ENCODE measurements at regions of chr1 and their contacts with region 1.

Region 1: GRCh38 chr1:168342572-168343280 is 62.0 kb downstream of the TBX19 start:
- DNase-seq: peak; percentile 61
- ATAC-seq: peak; percentile 98
- H3K4me3 ChIP-seq: no peak overlapping the region
- H3K27ac ChIP-seq: no peak overlapping the region
- H3K4me1 ChIP-seq: peaks cover 10% of the 10 kb centered on the region
- H3K27me3 ChIP-seq: no peaks in the 10 kb centered on the region
- CTCF ChIP-seq: peak; percentile 73 to 91 (median 82)
- EP300 ChIP-seq: no peak
- POLR2A ChIP-seq: no peak
- RAD21 ChIP-seq: peak; percentile 86

Region 2: GRCh38 chr1:168225476-168226190 is 117.1 kb before region 1 on chr1 and contains the start of gene SFT2D2:
- CTCF ChIA-PET with region 1: interaction called, 15 read pairs
- POLR2A ChIA-PET with region 1: no interaction called
- RAD21 ChIA-PET with region 1: interaction called, 3 read pairs
- SMC1A ChIA-PET with region 1: interaction called, 5 read pairs
- in situ Hi-C with region 1: no loop called
- intact Hi-C with region 1: no loop called
- DNase-seq: no peak
- ATAC-seq: peak; percentile 92
- H3K4me3 ChIP-seq: peak within 1 kb of the TSS; percentile 79
- H3K27ac ChIP-seq: peak within 1 kb of the TSS; percentile 85
- H3K4me1 ChIP-seq: peaks cover 28% of the 10 kb centered on the region
- H3K27me3 ChIP-seq: no peaks in the 10 kb centered on the region
- CTCF ChIP-seq: no peak
- EP300 ChIP-seq: no peak
- POLR2A ChIP-seq: peak; percentile 94
- RAD21 ChIP-seq: no peak
- polyA plus RNA-seq, gene SFT2D2: 5.6 to 6.3 TPM

Region 3: DNA sequence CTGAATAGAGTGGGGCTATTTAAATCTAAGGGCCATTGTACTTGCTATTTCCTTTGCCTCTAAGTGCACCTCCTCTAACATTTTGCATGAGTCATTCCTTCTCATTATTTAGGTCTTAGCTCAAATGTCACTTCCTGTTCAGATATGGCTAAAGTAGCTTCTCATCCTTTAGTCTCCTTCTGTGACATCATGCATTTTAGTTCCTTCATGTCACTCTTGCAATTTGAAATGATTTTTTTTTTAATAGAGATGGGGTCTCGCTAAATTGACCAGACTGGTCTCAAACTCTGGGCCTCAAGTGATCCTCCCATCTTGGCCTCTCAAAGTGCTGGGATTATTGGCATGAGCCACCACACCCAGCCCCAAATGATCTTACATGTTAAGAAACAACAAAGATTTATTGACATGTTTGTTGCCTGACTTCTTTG is 55.5 kb before region 1 on chr1:
- CTCF ChIA-PET with region 1: no interaction called
- POLR2A ChIA-PET with region 1: no interaction called
- RAD21 ChIA-PET with region 1: no interaction called
- SMC1A ChIA-PET with region 1: no interaction called
- in situ Hi-C with region 1: no loop called
- intact Hi-C with region 1: no loop called
- DNase-seq: no peak
- ATAC-seq: peak; percentile 56
- H3K4me3 ChIP-seq: no peak overlapping the region
- H3K27ac ChIP-seq: no peak overlapping the region
- H3K4me1 ChIP-seq: no peaks in the 10 kb centered on the region
- H3K27me3 ChIP-seq: no peaks in the 10 kb centered on the region
- CTCF ChIP-seq: no peak
- EP300 ChIP-seq: no peak
- POLR2A ChIP-seq: no peak
- RAD21 ChIP-seq: no peak

Region 4: DNA sequence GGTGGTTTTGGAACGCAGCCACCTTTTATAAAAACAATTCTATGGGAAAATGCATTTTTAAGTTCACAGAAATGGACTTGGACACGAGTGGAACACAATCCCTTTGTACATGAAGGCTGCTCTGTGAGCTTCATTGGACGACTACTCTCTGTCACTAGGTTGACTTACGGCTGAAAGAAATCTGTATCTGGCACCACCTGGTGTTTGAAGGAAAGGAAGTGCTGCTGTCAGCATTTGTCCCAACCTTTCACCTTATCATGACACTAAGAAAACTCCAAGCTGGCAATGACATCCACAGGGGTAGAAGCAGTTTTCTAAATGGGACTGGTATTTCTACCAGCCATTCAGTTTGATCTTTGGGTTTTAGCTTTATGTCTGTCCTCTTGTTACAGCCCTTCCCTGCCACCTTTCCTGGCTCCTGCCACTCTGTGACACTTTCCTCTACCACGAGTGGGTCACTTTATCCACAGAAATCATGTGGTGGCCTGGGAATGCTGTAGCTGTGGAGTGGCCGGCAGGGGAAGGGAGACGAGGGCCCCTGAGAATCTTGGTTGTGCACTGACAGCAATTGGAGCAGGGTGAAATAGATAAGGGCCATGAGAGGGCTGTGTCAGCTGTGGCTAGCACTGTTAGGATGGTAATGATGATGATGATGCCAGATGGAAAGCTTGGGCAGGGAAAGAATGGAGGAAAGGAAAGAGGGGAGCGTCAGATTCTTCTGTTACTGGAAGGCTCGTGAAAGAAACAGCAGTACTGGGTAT is 23.2 kb after region 1 on chr1:
- CTCF ChIA-PET with region 1: interaction called, 44 read pairs
- POLR2A ChIA-PET with region 1: no interaction called
- RAD21 ChIA-PET with region 1: interaction called, 18 read pairs
- SMC1A ChIA-PET with region 1: interaction called, 21 read pairs
- in situ Hi-C with region 1: no loop called
- intact Hi-C with region 1: no loop called
- DNase-seq: no peak
- ATAC-seq: 0 out of 3 replicates have a peak, but pooled peaks have one; percentile 22
- H3K4me3 ChIP-seq: no peak overlapping the region
- H3K27ac ChIP-seq: no peak overlapping the region
- H3K4me1 ChIP-seq: no peaks in the 10 kb centered on the region
- H3K27me3 ChIP-seq: peaks cover 0 to 2% of the 10 kb centered on the region in 2 experiments; a peak in 1 of 4 replicates
- CTCF ChIP-seq: peak; percentile 6 to 23 (median 12); a peak in 2 of 6 replicates
- EP300 ChIP-seq: no peak
- POLR2A ChIP-seq: no peak
- RAD21 ChIP-seq: peak; percentile 43

Region 5: GRCh38 chr1:168428063-168428731 is 85.5 kb after region 1 on chr1:
- CTCF ChIA-PET with region 1: interaction called, 283 read pairs
- POLR2A ChIA-PET with region 1: no interaction called
- RAD21 ChIA-PET with region 1: interaction called, 193 read pairs
- SMC1A ChIA-PET with region 1: interaction called, 239 read pairs
- in situ Hi-C with region 1: no loop called
- intact Hi-C with region 1: no loop called
- DNase-seq: no peak
- ATAC-seq: no peak
- H3K4me3 ChIP-seq: no peak overlapping the region
- H3K27ac ChIP-seq: no peak overlapping the region
- H3K4me1 ChIP-seq: no peaks in the 10 kb centered on the region
- H3K27me3 ChIP-seq: no peaks in the 10 kb centered on the region; a peak in 1 of 4 replicates
- CTCF ChIP-seq: no peak
- EP300 ChIP-seq: no peak
- POLR2A ChIP-seq: no peak
- RAD21 ChIP-seq: no peak

Region 6: GRCh38 chr1:168509875-168510791 is 167.4 kb after region 1 on chr1:
- CTCF ChIA-PET with region 1: interaction called, 9 read pairs
- POLR2A ChIA-PET with region 1: no interaction called
- RAD21 ChIA-PET with region 1: interaction called, 23 read pairs
- SMC1A ChIA-PET with region 1: interaction called, 10 read pairs
- in situ Hi-C with region 1: no loop called
- intact Hi-C with region 1: no loop called
- DNase-seq: peak; percentile 88
- ATAC-seq: peak; percentile 90
- H3K4me3 ChIP-seq: no peak overlapping the region
- H3K27ac ChIP-seq: peak overlapping the region; percentile 61
- H3K4me1 ChIP-seq: peaks cover 16% of the 10 kb centered on the region
- H3K27me3 ChIP-seq: no peaks in the 10 kb centered on the region
- CTCF ChIP-seq: no peak
- EP300 ChIP-seq: peak; percentile 12 to 64; a peak in 3 of 4 replicates
- POLR2A ChIP-seq: no peak
- RAD21 ChIP-seq: no peak; the same call in 1 of the 2 replicates

Region 7: DNA sequence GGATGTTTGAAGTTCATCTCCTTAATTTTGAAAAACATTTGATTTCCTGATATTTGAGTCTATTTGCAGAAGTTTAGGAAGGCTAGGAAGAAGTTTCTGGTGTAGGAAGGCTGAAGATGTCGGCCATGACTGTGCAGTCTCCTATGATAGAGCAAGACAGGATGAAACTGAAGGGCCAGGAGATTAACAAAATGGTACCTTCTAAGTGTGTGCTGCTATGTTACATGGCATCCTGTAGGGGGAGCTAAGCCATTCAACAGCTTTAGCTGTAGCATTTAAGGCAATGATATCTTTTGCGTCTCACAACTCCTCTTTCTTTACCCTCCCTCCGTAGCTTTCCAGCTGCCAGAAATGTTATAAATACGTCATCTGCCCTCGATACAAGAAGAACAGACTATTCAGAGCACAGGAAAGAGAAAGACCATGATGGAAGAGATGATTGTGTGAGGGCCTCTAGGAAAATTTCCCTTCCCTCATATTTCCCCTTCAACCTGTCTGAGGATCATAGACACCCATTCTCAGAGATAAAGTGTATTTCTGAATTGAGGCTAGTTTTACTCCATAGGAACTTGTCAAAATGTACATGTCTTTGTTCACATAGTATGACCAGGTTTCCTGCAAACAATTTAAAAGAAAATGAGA is 294.7 kb after region 1 on chr1:
- CTCF ChIA-PET with region 1: interaction called, 40 read pairs
- POLR2A ChIA-PET with region 1: no interaction called
- RAD21 ChIA-PET with region 1: interaction called, 20 read pairs
- SMC1A ChIA-PET with region 1: interaction called, 14 read pairs
- in situ Hi-C with region 1: no loop called
- intact Hi-C with region 1: no loop called
- DNase-seq: no peak
- ATAC-seq: peak; percentile 92
- H3K4me3 ChIP-seq: no peak overlapping the region
- H3K27ac ChIP-seq: no peak overlapping the region
- H3K4me1 ChIP-seq: no peaks in the 10 kb centered on the region
- H3K27me3 ChIP-seq: no peaks in the 10 kb centered on the region
- CTCF ChIP-seq: peak; percentile 64 to 80 (median 73)
- EP300 ChIP-seq: no peak
- POLR2A ChIP-seq: no peak
- RAD21 ChIP-seq: peak; percentile 65

Measured in GM12878 (cell line).